Activated T-helper 1 cell treated with anti-CD3 and anti-CD28 coated beads, Interleukin-12 subunit alpha, Interleukin-12 subunit beta, Interleukin-2, Interleukin-4 antibody, amounts not matched to agents 30 ng/mL and 10 ng/mL and 1 ng/mL, durations not matched to agents 14 hours and 24 hours and 36 hours (primary cell): ENCODE measurements at regions of chr7 and their contacts with region 1.

Region 1: DNA sequence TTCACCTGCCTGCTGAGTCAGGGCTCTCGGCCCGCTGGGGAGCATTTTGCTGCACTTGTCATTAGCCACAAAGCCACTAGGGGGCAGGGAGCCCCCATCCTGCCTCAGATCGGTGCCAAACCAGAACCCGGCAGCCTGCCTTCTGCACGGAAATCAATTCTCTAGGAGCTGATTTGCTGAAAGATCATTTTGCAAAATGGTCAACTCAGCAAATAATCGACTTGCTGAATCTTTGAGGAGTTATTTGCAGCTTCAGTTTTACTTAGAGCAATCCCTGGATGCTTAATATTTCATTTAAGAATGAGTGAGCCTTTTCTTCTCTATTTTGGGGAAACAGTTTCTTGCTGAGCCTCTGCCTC is 1.7 kb upstream of the GIMAP8 start:
- DNase-seq: peak; percentile 82
- H3K4me3 Mint-ChIP-seq: peak overlapping the region; percentile 97
- H3K27ac Mint-ChIP-seq: peak overlapping the region; percentile 95
- H3K4me1 Mint-ChIP-seq: peaks cover 66% of the 10 kb centered on the region
- H3K27me3 Mint-ChIP-seq: no peaks in the 10 kb centered on the region

Region 2: GRCh38 chr7:150481186-150481920 is 32.6 kb after region 1 on chr7:
- intact Hi-C with region 1: loop called (anchors 1 kb)
- DNase-seq: peak; percentile 60
- H3K4me3 Mint-ChIP-seq: peak overlapping the region; percentile 88
- H3K27ac Mint-ChIP-seq: peak overlapping the region; percentile 100
- H3K4me1 Mint-ChIP-seq: peaks cover 96% of the 10 kb centered on the region
- H3K27me3 Mint-ChIP-seq: no peaks in the 10 kb centered on the region

Region 3: DNA sequence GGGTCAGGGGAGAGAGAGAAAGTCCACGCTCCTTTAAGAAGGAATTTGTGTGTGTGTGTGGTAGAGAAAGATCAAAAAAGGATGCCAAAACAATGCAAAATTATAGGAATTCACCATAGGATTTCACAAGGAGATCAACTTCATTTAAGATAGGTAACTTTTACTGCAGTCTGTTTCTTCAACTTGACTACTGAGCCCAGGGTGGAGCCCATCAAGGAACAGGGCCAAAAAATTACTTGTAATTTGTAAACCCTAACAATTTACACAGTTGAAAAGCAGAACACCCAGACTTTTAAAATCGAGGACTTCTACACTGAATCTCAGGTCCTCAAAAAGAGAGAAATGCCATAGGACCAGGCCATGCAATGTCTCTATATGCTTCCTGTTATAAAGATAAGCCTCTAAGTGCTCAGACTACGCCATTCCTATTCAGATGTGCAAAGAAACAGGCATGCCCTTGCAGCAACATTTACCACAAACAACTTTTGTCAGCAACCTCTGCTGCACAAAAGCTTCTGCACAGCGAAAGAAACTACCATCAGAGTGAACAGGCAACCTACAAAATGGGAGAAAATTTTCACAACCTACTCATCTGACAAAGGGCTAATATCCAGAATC is 107.9 kb after region 1 on chr7:
- intact Hi-C with region 1: loop called (anchors 2 kb)
- DNase-seq: peak; percentile 48
- H3K4me3 Mint-ChIP-seq: peak overlapping the region; percentile 64
- H3K27ac Mint-ChIP-seq: peak overlapping the region; percentile 90
- H3K4me1 Mint-ChIP-seq: peaks cover 82% of the 10 kb centered on the region
- H3K27me3 Mint-ChIP-seq: no peaks in the 10 kb centered on the region

Region 4: GRCh38 chr7:150631866-150632864 is 183.4 kb after region 1 on chr7 and contains the start of gene GIMAP6:
- intact Hi-C with region 1: loop called (anchors 2 kb)
- DNase-seq: peak; percentile 48
- H3K4me3 Mint-ChIP-seq: peak within 1 kb of the TSS; percentile 94
- H3K27ac Mint-ChIP-seq: peak within 1 kb of the TSS; percentile 94
- H3K4me1 Mint-ChIP-seq: peaks cover 68% of the 10 kb centered on the region
- H3K27me3 Mint-ChIP-seq: no peaks in the 10 kb centered on the region
- total RNA-seq, gene GIMAP6: 38.7 and 41.3 TPM in 2 replicates

Region 5: GRCh38 chr7:150716368-150716767 is 267.6 kb after region 1 on chr7 and contains the start of gene GIMAP1:
- intact Hi-C with region 1: loop called (anchors 1 kb)
- DNase-seq: peak; percentile 58
- H3K4me3 Mint-ChIP-seq: peak within 1 kb of the TSS; percentile 97
- H3K27ac Mint-ChIP-seq: peak within 1 kb of the TSS; percentile 75
- H3K4me1 Mint-ChIP-seq: peaks cover 64% of the 10 kb centered on the region
- H3K27me3 Mint-ChIP-seq: no peaks in the 10 kb centered on the region
- total RNA-seq, gene GIMAP1: 4.6 and 4.9 TPM in 2 replicates

Region 6: GRCh38 chr7:150988230-150989226 is 539.8 kb after region 1 on chr7:
- intact Hi-C with region 1: loop called (anchors 10 kb)
- DNase-seq: peak; percentile 57
- H3K4me3 Mint-ChIP-seq: peak overlapping the region; percentile 58
- H3K27ac Mint-ChIP-seq: no peak overlapping the region
- H3K4me1 Mint-ChIP-seq: peaks cover 25% of the 10 kb centered on the region
- H3K27me3 Mint-ChIP-seq: peaks cover 30% of the 10 kb centered on the region

Region 7: DNA sequence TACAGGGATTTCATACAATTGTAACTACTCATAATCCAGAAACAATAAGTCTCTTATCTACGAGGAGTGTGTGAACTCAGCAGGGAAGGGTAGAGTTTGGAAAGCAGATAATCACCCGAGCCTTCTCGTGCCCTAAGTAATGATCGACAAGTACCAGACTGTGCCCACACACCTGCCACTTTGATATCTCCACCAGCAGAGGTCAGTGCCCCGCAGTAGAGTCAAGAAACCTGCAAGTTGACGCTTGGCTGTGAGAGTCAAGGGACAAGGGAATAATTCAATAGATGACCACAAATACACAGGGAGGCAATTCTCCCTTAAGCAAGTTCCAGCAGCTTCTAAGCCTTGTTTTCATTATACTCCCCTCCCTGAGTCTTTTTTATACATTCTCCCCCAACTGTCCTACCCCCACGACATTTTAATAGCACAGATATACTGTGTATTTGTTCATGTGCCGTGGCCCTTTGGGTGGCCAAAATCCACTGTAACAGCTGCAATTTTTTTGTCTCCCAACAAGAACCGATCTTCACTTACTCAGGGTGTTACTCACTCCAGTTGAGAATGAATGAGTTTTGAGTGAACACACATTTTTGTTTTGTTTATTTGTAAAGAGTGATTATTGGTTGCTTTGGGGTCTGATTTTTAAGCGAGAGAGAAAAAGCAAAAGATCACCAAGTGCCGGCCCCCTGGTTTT is 1177.8 kb after region 1 on chr7:
- intact Hi-C with region 1: no loop called
- DNase-seq: no peak
- H3K4me3 Mint-ChIP-seq: no peak overlapping the region
- H3K27ac Mint-ChIP-seq: no peak overlapping the region
- H3K4me1 Mint-ChIP-seq: peaks cover 23% of the 10 kb centered on the region
- H3K27me3 Mint-ChIP-seq: peaks cover 9% of the 10 kb centered on the region